H1 (cell line): ENCODE measurements at regions of chr17 and their contacts with region 1.

Region 1: DNA sequence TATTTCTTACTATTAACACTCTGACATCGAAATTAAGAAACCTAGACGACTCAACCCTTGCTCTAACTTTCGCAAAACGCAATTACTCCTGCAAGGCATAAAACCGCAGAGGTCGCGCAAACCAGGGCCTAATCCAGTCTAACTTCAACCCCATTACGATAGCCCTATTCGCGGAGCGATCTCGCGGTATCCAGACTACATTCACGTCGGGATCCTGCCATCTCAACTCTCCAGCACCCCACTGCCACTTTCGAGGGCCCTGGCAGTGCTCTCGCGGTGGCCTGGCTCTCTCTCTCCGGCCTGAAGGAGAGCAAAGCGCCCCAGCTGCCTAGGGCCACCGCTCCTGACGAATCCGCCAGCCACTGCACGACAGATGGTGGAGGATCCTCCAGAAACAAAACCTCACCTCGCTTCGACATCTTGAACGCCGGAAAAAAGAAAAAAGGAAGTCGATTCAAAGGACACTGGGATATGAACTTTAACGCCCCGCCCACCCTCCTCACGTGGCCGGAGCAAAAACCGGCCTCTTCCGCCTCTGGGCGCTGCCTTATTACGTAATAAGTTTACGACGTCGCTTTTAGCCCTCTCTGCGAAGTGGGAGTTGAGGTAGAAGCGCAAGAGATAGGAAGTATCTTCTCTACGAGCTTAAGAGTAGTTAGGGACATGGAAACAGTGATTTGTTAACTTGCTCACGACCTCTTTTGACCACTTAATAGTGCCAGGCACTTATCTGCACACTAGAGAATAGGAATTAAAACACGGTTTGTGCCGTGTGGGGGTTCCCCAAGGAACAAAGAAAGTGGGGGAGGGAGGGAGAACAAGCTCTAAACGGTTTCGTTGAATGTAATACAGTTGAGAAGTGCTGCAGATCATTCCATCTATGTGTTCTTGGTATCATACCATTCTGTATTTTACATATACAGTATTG is at the start of gene RPL23:
- DNase-seq: peak; percentile 85 to 90
- H3K4me3 ChIP-seq: peak within 1 kb of the TSS; percentile 90 to 100 (median 97)
- H3K27ac ChIP-seq: peak within 1 kb of the TSS; percentile 97
- H3K4me1 ChIP-seq: peaks cover 3 to 10% (median 5%) of the 10 kb centered on the region in 4 experiments; a peak in 5 of 7 replicates
- H3K27me3 ChIP-seq: no peaks in the 10 kb centered on the region
- CTCF ChIP-seq: no peak
- EP300 ChIP-seq: peak in 1 of 2 experiments; percentile 28; a peak in 1 of 3 replicates
- POLR2A ChIP-seq: peak; percentile 92 to 97
- RAD21 ChIP-seq: no peak
- total RNA-seq, gene RPL23: 2,091 and 2,148 TPM in 2 replicates

Region 2: DNA sequence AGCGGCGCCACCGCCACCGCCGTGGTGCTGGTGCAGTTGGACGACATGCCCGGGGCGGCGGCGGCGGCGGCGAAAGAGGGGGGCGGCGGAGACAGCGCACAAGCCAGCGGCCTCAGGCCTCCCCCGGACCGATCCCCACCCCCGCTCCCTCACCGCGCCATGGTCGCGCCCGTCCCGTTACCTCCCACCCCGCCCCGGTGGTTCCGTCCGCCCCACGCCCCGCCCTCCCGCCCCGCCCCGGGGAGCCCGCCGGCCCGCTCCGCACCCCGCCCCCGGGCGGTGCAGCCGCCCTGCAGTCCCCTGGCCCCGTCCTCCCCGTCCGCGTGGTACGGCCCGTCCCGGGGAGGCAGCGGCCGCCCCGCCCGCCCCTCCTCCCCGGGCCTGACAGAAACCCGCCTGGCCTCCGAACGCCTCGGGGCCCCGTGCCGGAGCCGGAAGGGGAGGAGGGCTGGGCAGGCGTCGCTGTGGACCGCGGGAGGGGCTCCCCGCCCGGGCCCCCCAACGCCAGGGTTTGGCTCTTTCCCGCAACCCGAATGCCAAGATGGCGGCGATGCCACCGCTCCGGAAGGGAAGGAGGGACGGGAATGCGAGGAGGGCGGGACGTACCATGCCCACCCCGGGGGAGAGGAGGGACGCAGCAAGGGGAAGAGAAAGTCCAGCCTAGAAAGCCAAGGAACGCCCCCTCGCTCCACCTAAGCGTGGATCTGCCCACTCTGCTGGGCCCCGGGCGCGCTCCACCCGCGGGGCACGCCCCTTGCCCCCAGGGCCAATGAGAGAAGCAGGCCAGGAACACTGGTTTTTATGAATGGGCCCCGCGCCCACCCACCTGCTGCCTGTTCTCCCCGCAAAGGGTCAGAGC is 53.9 kb before region 1 on chr17 and contains the start of gene PIP4K2B:
- CTCF ChIA-PET with region 1: no interaction called
- POLR2A ChIA-PET with region 1: interaction called, 14 read pairs
- DNase-seq: peak; percentile 93 to 96
- H3K4me3 ChIP-seq: peak within 1 kb of the TSS; percentile 79 to 90 (median 82)
- H3K27ac ChIP-seq: peak within 1 kb of the TSS; percentile 99
- H3K4me1 ChIP-seq: peaks cover 5 to 8% (median 5%) of the 10 kb centered on the region in 4 experiments; a peak in 4 of 7 replicates
- H3K27me3 ChIP-seq: no peaks in the 10 kb centered on the region
- CTCF ChIP-seq: no peak
- EP300 ChIP-seq: peak in 1 of 2 experiments; percentile 98; a peak in 2 of 3 replicates
- POLR2A ChIP-seq: peak; percentile 83 to 86
- RAD21 ChIP-seq: no peak
- total RNA-seq, gene PIP4K2B: 57.7 and 57.8 TPM in 2 replicates

Region 3: GRCh38 chr17:38841141-38841485 is 12.4 kb before region 1 on chr17:
- CTCF ChIA-PET with region 1: interaction called, 4 read pairs
- POLR2A ChIA-PET with region 1: interaction called, 337 read pairs
- DNase-seq: no peak
- H3K4me3 ChIP-seq: no peak overlapping the region
- H3K27ac ChIP-seq: no peak overlapping the region
- H3K4me1 ChIP-seq: peaks cover 0 to 5% (median 2%) of the 10 kb centered on the region in 4 experiments; a peak in 2 of 7 replicates
- H3K27me3 ChIP-seq: no peaks in the 10 kb centered on the region
- CTCF ChIP-seq: no peak
- EP300 ChIP-seq: no peak
- POLR2A ChIP-seq: no peak
- RAD21 ChIP-seq: no peak

Region 4: GRCh38 chr17:38885728-38886561 is 32.4 kb after region 1 on chr17:
- CTCF ChIA-PET with region 1: interaction called, 3 read pairs
- POLR2A ChIA-PET with region 1: interaction called, 468 read pairs
- DNase-seq: no peak
- H3K4me3 ChIP-seq: peak overlapping the region in 1 of 4 experiments; percentile 0; a peak in 1 of 8 replicates
- H3K27ac ChIP-seq: no peak overlapping the region
- H3K4me1 ChIP-seq: peaks cover 14 to 32% (median 25%) of the 10 kb centered on the region in 4 experiments
- H3K27me3 ChIP-seq: no peaks in the 10 kb centered on the region
- CTCF ChIP-seq: no peak
- EP300 ChIP-seq: no peak
- POLR2A ChIP-seq: no peak
- RAD21 ChIP-seq: no peak

Region 5: DNA sequence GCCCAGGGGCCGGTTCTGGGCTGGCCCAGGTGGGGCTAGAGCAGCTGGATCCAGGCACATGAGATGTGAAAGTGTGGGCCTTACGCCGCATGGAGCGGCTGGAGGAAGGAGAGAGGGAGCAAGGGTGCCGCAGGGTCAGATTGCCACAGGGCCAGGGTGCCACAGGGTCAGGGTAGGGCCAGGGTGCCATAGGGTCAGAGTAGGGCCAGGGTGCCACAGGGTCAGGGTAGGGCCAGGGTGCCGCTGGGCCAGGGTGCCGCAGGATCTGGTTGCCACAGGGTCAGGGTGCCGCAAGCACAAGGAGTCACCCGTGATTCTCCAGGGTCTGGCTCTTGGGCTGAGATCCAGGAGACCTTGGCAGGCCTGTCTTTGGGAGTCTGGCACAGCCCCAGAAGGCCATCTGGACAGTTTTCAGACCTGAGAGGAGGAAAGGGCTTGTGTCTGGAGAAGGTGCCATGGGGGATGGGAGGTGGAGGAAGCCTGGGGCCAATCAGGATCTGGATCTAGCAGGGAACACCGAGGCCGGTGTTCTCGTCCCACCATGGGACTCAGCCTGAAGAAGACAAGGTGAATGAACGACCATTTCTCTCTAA is 58.8 kb after region 1 on chr17:
- CTCF ChIA-PET with region 1: interaction called, 10 read pairs
- POLR2A ChIA-PET with region 1: interaction called, 51 read pairs
- DNase-seq: no peak
- H3K4me3 ChIP-seq: no peak overlapping the region
- H3K27ac ChIP-seq: no peak overlapping the region
- H3K4me1 ChIP-seq: peaks cover 0 to 6% (median 2%) of the 10 kb centered on the region in 4 experiments; a peak in 2 of 7 replicates
- H3K27me3 ChIP-seq: no peaks in the 10 kb centered on the region
- CTCF ChIP-seq: no peak
- EP300 ChIP-seq: no peak
- POLR2A ChIP-seq: no peak
- RAD21 ChIP-seq: no peak

Region 6: DNA sequence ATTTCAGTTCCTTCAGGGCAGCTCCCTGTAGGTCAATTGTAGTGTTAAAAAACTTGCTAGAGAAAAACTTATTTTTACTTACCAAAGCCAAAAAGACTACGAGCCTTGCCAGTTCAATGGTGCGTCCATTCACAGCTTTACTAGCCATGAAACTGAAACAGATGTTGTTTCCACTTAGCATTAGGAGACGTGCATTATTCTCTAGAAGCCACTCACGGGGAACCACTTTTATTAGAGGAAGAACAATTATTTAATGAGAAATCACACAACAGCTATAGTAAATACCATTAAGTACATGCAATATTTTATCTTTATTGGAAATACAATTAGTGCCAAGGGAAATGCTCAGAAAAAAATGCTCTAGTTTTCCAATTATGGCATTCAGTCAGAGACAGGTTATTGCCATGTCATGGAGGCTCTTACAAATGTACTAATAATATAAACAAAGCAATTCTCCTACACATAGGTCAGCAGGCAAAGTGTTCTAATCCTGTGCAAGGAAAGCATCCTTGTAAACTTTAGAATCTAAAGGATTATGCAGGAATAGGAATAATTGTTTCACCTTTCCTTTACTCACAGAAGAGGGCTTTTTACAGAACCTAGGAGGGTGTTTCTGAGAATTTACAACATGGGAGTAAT is 89.3 kb after region 1 on chr17:
- CTCF ChIA-PET with region 1: no interaction called
- POLR2A ChIA-PET with region 1: interaction called, 16 read pairs
- DNase-seq: no peak
- H3K4me3 ChIP-seq: no peak overlapping the region
- H3K27ac ChIP-seq: no peak overlapping the region
- H3K4me1 ChIP-seq: no peaks in the 10 kb centered on the region
- H3K27me3 ChIP-seq: no peaks in the 10 kb centered on the region
- CTCF ChIP-seq: no peak
- EP300 ChIP-seq: no peak
- POLR2A ChIP-seq: no peak
- RAD21 ChIP-seq: no peak

Region 7: DNA sequence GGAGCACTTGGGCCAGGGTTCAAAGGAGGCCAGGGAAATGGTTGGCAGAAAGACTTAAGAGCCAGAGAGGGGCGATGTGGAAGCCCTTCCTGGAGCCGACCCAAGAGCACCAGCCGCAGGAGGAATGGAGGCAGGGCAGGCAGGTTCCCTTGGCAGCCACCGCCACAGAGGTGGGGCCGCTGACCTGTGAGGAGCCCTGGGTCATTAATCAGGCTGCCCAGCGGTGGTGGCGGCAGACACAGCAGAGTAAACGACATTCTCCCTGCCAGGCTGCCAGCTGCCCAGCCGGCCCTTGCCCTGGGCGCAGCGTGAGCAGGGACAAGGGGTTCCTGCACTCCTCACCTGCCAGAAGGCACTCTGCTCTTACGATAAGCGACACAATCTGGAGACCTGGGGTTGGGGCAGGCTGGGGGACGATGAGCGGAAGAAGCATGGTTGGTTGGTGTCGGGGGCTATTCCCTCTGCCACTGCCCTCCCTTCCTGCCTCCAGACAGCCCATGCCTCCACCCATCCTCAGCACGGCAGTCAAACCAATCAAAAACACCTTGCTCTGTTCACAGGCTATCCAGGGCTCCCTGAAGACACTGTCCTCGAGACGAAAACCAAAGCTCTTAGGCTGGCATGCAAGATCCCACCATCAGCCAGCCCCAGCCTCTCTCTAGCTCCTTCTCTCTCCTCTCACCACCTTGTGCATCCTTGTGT is 257.0 kb after region 1 on chr17:
- CTCF ChIA-PET with region 1: no interaction called
- POLR2A ChIA-PET with region 1: no interaction called
- DNase-seq: no peak
- H3K4me3 ChIP-seq: no peak overlapping the region
- H3K27ac ChIP-seq: no peak overlapping the region
- H3K4me1 ChIP-seq: peaks cover 0 to 2% (median 0%) of the 10 kb centered on the region in 4 experiments; a peak in 1 of 7 replicates
- H3K27me3 ChIP-seq: no peaks in the 10 kb centered on the region; a peak in 2 of 7 replicates
- CTCF ChIP-seq: peak; percentile 22 to 43 (median 33); a peak in 3 of 4 replicates
- EP300 ChIP-seq: no peak
- POLR2A ChIP-seq: no peak
- RAD21 ChIP-seq: peak in 1 of 2 experiments; percentile 45; a peak in 2 of 4 replicates